Heart left ventricle (tissue), 16 donors: ENCODE measurements at regions of chr3 and their contacts with region 1.

Region 1: DNA sequence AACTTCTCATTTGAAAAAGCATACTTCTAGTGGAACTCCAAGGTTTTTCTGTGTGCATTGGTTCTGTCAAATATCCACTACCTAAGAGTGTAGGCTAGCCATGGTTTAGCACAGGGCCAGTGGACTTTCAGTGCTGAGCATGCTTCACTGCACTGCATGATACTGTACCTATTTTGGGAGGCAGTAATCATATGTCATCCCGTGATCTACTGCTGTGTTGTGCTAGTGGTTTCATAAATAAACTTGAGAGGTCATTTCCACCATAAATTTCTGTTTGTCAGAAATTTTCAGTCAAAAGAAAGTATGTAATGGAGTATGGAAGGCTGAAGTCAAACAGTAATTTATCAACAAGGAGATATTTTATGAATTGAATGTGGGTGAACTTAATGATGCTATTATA is 203.6 kb downstream of the ROBO1 start:
- DNase-seq: no peak
- ATAC-seq: peak in 3 of 4 donors; percentile 70 to 83 (median 77)
- H3K4me3 ChIP-seq: no peak overlapping the region
- H3K27ac ChIP-seq: no peak overlapping the region
- H3K4me1 ChIP-seq: no peaks in the 10 kb centered on the region
- H3K27me3 ChIP-seq: no peaks in the 10 kb centered on the region
- CTCF ChIP-seq: no peak
- POLR2A ChIP-seq: no peak

Region 2: GRCh38 chr3:79506751-79507150 is 57.4 kb before region 1 on chr3:
- intact Hi-C with region 1: loop called in 1 of 10 experiments (anchors 10 kb)
- DNase-seq: no peak
- ATAC-seq: no peak
- H3K4me3 ChIP-seq: no peak overlapping the region
- H3K27ac ChIP-seq: no peak overlapping the region
- H3K4me1 ChIP-seq: no peaks in the 10 kb centered on the region
- H3K27me3 ChIP-seq: no peaks in the 10 kb centered on the region
- CTCF ChIP-seq: no peak
- POLR2A ChIP-seq: no peak

Region 3: GRCh38 chr3:79606414-79606813 is 42.2 kb after region 1 on chr3:
- intact Hi-C with region 1: no loop called
- DNase-seq: no peak
- ATAC-seq: no peak
- H3K4me3 ChIP-seq: no peak overlapping the region
- H3K27ac ChIP-seq: no peak overlapping the region
- H3K4me1 ChIP-seq: no peaks in the 10 kb centered on the region
- H3K27me3 ChIP-seq: no peaks in the 10 kb centered on the region
- CTCF ChIP-seq: no peak
- POLR2A ChIP-seq: no peak